ENCODE measurements at regions of chr5 and their contacts with region 1.

Region 1: DNA sequence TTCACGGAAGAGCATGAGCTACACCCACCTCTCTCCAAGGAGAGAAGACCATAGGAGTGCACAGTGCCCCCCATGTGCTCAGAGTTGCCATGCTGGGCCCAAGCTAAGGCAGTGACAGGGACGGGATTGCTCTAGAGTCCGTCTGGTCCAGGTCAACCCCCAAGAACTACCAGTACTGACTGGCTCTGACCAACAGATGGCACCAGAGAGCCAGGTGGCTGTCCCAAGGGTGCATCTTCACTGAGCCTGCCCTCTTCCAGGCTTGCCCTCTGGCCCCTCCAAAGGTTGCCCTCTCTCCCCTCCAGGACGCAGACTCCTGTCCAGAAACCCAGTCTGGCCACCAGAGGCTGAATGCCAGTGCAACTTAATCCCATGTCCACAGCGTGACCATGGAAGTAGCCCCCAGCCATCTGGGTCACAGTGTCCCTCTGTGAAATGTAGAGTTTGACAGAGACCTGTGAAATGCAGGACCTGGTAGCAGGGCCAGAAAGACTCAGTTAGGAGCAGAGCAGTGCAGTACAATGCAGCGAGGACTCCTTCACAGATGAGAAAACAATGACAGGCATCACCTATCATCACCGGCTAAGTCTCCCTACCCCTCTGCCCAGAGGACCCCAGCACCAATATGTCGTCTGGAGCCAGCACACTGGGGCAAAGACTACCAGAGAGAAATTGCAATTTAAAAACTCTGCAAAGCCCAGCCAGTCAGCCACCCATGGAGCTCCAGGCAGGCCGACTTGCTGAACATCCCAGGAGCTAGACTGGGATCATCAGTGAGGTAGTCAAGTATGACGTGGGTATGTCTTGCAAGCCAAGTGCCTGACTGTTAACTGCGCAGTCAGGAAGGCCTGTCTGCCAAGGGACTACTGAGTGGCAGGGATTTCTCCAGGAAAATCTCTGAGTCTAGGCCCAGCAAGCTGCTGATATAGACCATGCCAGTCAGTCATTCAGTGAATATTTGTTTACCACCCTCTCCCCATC is 7.7 kb upstream of the SKP1 start:
- DNase-seq: peak; percentile 81
- H3K4me3 ChIP-seq: no peak overlapping the region
- H3K27ac ChIP-seq: no peak overlapping the region
- H3K4me1 ChIP-seq: no peaks in the 10 kb centered on the region; a peak in 1 of 4 replicates
- H3K27me3 ChIP-seq: no peaks in the 10 kb centered on the region
- CTCF ChIP-seq: peak; percentile 84
- EP300 ChIP-seq: no peak
- RAD21 ChIP-seq: peak; percentile 86

Region 2: DNA sequence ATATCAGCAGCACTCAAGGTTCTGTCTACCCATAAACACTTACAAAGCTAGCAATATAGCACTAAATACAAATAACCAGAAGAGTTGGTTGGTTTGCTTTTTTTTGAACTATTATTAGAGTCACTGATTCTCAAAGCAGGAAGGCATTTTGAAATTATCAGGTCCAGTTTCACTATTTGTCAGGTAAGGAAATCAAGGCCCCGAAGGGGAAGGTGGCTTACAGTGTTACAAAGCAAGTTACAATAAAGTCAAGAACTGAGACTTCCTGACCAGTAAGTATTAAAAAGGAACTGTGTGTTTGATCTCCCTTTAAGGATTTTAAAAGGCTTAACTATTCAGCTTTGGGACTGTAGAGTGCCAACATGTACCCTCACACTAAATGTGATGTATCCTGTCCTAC is 226.9 kb before region 1 on chr5:
- CTCF ChIA-PET with region 1: no interaction called
- POLR2A ChIA-PET with region 1: no interaction called
- DNase-seq: no peak
- H3K4me3 ChIP-seq: no peak overlapping the region
- H3K27ac ChIP-seq: no peak overlapping the region
- H3K4me1 ChIP-seq: peaks cover 3 to 7% of the 10 kb centered on the region in 2 experiments; a peak in 2 of 4 replicates
- H3K27me3 ChIP-seq: no peaks in the 10 kb centered on the region
- CTCF ChIP-seq: no peak
- EP300 ChIP-seq: no peak
- RAD21 ChIP-seq: no peak

Region 3: DNA sequence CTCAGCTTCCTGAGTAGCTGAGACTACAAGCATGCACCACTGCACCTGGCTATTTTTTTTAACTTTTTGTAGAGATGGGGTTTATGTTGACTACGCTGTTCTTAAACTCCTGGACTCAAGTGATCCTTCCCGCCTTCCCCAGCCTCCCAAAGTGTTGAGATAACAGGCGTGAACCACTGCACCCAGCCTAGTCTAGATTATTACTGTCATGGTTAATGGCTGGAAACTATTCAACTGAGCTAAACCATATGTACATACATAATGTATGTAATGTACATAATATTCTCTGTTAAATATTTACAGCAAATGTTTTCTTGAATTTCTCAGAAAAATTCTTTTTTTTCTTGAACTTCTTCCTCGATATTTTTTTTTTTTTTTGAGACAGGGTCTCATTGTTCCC is 20.1 kb after region 1 on chr5:
- CTCF ChIA-PET with region 1: interaction called, 25 read pairs
- POLR2A ChIA-PET with region 1: no interaction called
- DNase-seq: no peak
- H3K4me3 ChIP-seq: no peak overlapping the region
- H3K27ac ChIP-seq: no peak overlapping the region
- H3K4me1 ChIP-seq: peaks cover 3 to 6% of the 10 kb centered on the region in 2 experiments; a peak in 3 of 4 replicates
- H3K27me3 ChIP-seq: no peaks in the 10 kb centered on the region
- CTCF ChIP-seq: no peak
- EP300 ChIP-seq: no peak
- RAD21 ChIP-seq: no peak

Region 4: DNA sequence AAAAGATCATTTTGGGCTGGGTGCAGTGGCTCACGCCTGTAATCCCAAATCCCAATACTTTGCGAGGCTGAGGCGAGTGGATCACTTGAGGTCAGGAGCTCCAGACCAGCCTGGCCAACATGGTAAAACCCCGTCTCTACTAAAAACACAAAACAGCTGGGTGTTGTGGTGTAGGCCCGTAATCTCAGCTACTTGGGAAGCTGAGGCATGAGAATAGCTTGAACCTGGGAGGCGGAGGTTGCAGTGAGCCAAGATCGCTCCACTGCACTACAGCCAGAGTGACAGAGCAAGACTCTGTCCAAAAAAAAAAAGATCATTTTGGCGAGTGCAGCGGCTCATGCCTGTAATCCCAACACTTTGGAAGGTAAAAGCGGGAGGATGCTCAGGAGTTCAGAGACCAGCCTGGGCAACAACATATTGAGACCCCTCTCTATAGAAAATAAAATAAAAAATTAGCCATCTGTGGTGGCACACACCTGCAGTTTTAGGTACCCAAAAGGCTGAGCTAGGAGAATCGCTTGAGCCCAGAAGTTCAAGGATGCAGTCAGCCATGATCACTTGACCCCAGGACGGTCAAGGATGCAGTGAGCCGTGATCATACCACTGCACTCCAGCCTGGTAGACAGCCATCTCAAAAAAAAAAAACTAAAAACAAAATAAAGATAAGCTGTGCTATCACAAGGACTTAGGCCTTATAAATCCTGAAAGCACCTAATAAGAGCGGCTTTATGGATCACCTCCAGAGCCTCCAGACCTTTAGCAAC is 25.2 kb after region 1 on chr5:
- CTCF ChIA-PET with region 1: interaction called, 25 read pairs
- POLR2A ChIA-PET with region 1: no interaction called
- DNase-seq: no peak
- H3K4me3 ChIP-seq: no peak overlapping the region
- H3K27ac ChIP-seq: 0 out of 4 replicates have a peak overlapping the region, but pooled peaks of 1 of the 2 experiments have one; percentile 9
- H3K4me1 ChIP-seq: peaks cover 3 to 6% of the 10 kb centered on the region in 2 experiments; a peak in 3 of 4 replicates
- H3K27me3 ChIP-seq: no peaks in the 10 kb centered on the region
- CTCF ChIP-seq: no peak
- EP300 ChIP-seq: no peak
- RAD21 ChIP-seq: no peak